ENCODE measurements at regions of chr13 and their contacts with region 1.

Region 1: GRCh38 chr13:26872525-26873385 is 112.2 kb upstream of the GPR12 start:
- DNase-seq: peak; percentile 52 to 81 (median 67)
- H3K4me3 ChIP-seq: no peak overlapping the region
- H3K27ac ChIP-seq: no peak overlapping the region
- H3K4me1 ChIP-seq: no peaks in the 10 kb centered on the region
- H3K27me3 ChIP-seq: peaks cover 0 to 18% (median 4%) of the 10 kb centered on the region in 5 experiments

Region 2: DNA sequence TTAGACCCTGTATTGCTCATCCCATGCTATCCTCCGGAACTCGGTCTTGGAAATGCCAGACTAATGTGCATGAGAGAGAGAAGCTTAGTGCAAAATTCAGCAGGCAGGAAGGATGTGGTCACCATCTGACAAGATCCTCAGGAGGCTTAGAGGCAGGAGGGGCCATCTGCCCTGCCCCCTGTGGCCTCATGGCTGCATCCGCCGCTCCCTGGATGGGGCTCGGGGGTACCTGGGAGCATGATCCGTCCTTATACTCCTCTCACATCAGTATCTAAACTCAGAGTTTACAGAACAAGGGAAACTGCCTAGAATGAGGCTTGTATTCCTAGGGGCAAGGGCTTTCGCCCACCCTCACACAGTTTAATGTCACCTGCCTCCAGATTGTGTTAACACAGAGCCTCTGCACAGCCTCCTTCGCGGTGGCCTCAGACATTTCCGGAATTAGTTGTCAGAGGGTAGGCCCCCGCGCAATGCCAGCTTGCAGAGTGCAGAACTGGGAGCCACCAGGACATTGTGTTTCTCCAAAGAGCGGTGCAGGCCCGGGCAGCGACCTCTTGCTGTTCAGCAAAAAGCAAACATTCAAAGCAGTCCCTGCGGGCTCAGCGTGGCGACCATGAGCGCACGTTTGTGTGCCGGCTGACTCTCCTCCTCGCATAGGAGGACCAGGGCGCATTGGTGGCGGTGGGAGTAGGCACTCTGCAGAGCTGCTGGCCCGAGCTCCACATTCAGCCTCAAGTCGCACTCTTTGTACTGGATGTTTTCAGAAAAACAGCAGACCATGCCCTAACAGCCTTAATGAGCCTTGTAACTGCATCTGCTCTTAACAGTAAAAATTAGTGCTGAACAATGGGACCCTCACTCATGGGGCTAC is 151.3 kb before region 1 on chr13:
- CTCF ChIA-PET with region 1: interaction called, 24 read pairs
- POLR2A ChIA-PET with region 1: no interaction called
- DNase-seq: peak; percentile 81 to 94 (median 94)
- H3K4me3 ChIP-seq: peak overlapping the region in 5 of 7 experiments; percentile 20 to 69 (median 56)
- H3K27ac ChIP-seq: peak overlapping the region; percentile 85 to 96
- H3K4me1 ChIP-seq: peaks cover 24 to 53% (median 44%) of the 10 kb centered on the region in 4 experiments
- H3K27me3 ChIP-seq: no peaks in the 10 kb centered on the region